ENCODE measurements at regions of chr1 and their contacts with region 1.

Region 1: GRCh38 chr1:201254625-201255506 is 28.4 kb upstream of the PKP1 start:
- DNase-seq: peak; percentile 72 to 77
- H3K4me3 ChIP-seq: no peak overlapping the region
- H3K27ac ChIP-seq: no peak overlapping the region
- H3K4me1 ChIP-seq: peaks cover 6 to 11% (median 7%) of the 10 kb centered on the region in 4 donors
- H3K27me3 ChIP-seq: peaks cover 5 to 32% (median 6%) of the 10 kb centered on the region in 3 donors
- CTCF ChIP-seq: peak in 6 of 7 experiments; percentile 90 to 98 (median 94)
- EP300 ChIP-seq: no peak
- POLR2A ChIP-seq: no peak

Region 2: GRCh38 chr1:201361652-201362504 is 107.0 kb after region 1 on chr1:
- intact Hi-C with region 1: loop called (anchors 5 kb)
- DNase-seq: peak in 1 of 2 donors; percentile 69
- H3K4me3 ChIP-seq: no peak overlapping the region
- H3K27ac ChIP-seq: no peak overlapping the region
- H3K4me1 ChIP-seq: no peaks in the 10 kb centered on the region
- H3K27me3 ChIP-seq: peaks cover 0 to 41% (median 0%) of the 10 kb centered on the region in 3 donors
- CTCF ChIP-seq: peak in 5 of 7 experiments; percentile 54 to 81 (median 69)
- EP300 ChIP-seq: no peak
- POLR2A ChIP-seq: no peak